ENCODE measurements at regions of chr16 and their contacts with region 1.

Region 1: GRCh38 chr16:10959161-10959560 is 14.8 kb downstream of the CLEC16A start:
- DNase-seq: no peak
- H3K4me3 ChIP-seq: no peak overlapping the region
- H3K27ac ChIP-seq: peak overlapping the region; percentile 47
- H3K27me3 ChIP-seq: no peaks in the 10 kb centered on the region
- CTCF ChIP-seq: no peak

Region 2: GRCh38 chr16:10765772-10766171 is 193.4 kb before region 1 on chr16:
- CTCF ChIA-PET with region 1: no interaction called
- POLR2A ChIA-PET with region 1: no interaction called
- DNase-seq: no peak
- H3K4me3 ChIP-seq: no peak overlapping the region
- H3K27ac ChIP-seq: no peak overlapping the region
- H3K27me3 ChIP-seq: no peaks in the 10 kb centered on the region
- CTCF ChIP-seq: no peak

Region 3: DNA sequence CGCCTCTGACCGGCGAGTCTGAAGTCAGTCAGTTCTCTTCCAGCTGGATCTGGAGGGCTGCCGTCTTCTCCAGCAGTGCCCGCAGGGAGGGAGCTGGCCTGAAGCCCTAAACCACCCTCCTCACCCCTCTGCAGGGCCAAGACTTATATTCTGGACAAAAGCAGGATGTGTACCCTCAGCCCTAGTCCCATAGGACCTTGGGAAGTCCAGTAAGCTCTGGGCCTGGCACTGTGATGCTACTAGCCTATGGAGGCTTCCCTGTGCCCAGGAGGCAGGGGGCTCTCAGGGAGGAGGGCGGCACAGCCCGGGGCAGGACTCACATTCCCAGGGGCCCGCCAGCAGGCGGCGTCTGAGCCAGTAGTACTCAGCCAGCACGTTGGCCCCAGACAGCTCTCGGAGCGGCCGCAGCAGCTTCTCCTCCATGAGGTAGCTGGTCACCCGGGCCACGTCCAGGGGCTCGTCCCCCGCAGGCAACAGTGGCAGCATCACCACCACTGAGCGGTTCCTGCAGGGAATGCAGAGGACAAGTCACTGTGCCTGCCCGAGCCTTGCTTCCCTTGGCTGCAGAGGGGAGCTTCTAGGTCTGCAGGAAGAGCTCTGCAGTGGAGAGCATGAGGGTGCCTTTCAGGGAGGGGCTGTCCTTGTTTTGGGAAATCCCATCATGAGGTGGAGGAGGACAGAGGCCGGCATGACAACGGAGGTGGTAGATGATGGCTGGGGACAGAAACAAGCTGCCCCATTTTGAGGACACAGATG is 427.8 kb after region 1 on chr16:
- CTCF ChIA-PET with region 1: interaction called, 15 read pairs
- POLR2A ChIA-PET with region 1: no interaction called
- DNase-seq: no peak
- H3K4me3 ChIP-seq: no peak overlapping the region
- H3K27ac ChIP-seq: no peak overlapping the region
- H3K27me3 ChIP-seq: peaks cover 10% of the 10 kb centered on the region
- CTCF ChIP-seq: peak; percentile 75

Measured in AG04450 (cell line).